IMR-90 (cell line): ENCODE measurements at regions of chr17 and their contacts with region 1.

Region 1: DNA sequence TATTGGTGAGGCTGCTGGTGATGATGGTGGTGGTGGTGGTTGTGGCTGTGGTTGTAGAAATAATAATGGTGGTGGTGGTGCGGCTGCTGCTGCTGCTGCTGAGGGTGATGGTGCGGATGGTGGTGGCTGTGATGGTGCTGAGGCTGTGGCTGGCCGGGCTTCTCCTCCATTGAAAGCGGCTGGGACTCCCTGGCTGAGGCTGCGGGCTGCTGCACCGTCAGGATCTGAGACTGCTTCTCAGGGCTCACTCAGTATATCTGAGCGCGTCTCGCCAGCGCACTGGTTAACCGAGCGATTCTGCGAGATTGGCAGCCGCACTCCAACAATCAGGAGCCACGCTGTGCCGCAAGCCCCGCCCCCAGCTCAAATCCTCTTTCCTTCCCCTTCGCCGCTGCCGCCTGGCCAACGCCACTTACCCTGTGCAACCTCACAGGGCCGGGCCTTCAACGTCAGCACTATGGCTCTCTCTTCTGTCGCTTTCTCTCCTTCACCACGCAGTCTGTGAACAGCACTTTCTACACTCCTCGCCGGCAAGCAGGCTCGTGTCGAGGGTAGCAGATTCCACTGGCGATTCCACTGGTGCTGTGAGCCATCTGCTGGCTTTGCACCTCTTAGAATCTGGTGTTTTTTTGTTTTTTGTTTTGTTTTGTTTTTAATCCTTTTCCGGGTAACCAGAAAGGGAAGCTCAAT is at the start of gene NUFIP2:
- DNase-seq: peak; percentile 98
- ATAC-seq: peak; percentile 90
- H3K4me3 ChIP-seq: peak within 1 kb of the TSS; percentile 70
- H3K27ac ChIP-seq: peak within 1 kb of the TSS; percentile 93
- H3K4me1 ChIP-seq: no peaks in the 10 kb centered on the region
- H3K27me3 ChIP-seq: no peaks in the 10 kb centered on the region
- CTCF ChIP-seq: no peak
- POLR2A ChIP-seq: peak; percentile 100
- RAD21 ChIP-seq: no peak
- total RNA-seq, gene NUFIP2: 25.6 and 38.9 TPM in 2 replicates

Region 2: GRCh38 chr17:29019475-29020181 is 274.4 kb before region 1 on chr17:
- CTCF ChIA-PET with region 1: no interaction called
- POLR2A ChIA-PET with region 1: no interaction called
- dilution Hi-C with region 1: no loop called
- in situ Hi-C with region 1: no loop called
- intact Hi-C with region 1: no loop called
- DNase-seq: no peak
- ATAC-seq: no peak
- H3K4me3 ChIP-seq: no peak overlapping the region
- H3K27ac ChIP-seq: no peak overlapping the region
- H3K4me1 ChIP-seq: no peaks in the 10 kb centered on the region
- H3K27me3 ChIP-seq: peaks cover 87% of the 10 kb centered on the region
- CTCF ChIP-seq: no peak
- POLR2A ChIP-seq: no peak
- RAD21 ChIP-seq: no peak

Region 3: GRCh38 chr17:29212681-29213121 is 81.3 kb before region 1 on chr17:
- CTCF ChIA-PET with region 1: no interaction called
- POLR2A ChIA-PET with region 1: no interaction called
- dilution Hi-C with region 1: no loop called
- in situ Hi-C with region 1: no loop called
- intact Hi-C with region 1: no loop called
- DNase-seq: peak; percentile 6
- ATAC-seq: no peak
- H3K4me3 ChIP-seq: no peak overlapping the region
- H3K27ac ChIP-seq: no peak overlapping the region
- H3K4me1 ChIP-seq: peaks cover 2% of the 10 kb centered on the region; the same call in 1 of the 2 replicates
- H3K27me3 ChIP-seq: 0 out of 2 replicates have a peak, but pooled peaks cover 2% of the 10 kb centered on the region
- CTCF ChIP-seq: no peak
- POLR2A ChIP-seq: no peak
- RAD21 ChIP-seq: no peak

Region 4: DNA sequence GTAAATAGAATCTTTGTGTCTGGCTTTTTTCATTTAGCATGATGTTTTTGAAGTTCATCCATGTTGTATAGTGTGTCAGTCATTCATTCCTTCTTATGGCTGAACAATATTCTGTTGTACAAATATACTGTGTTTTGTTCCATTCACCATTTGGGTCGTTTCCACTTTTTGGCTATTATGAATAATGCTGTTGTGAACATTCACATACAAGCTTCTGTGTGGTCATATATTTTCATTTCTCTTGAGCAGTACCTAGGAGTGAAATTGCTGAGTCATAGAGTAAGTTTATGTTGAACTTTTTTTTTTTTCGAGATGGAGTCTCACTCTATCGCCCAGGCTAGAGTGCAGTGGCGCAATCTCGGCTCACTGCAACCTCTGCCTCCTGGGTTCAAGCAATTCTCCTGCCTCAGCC is 63.8 kb after region 1 on chr17:
- CTCF ChIA-PET with region 1: no interaction called
- POLR2A ChIA-PET with region 1: no interaction called
- dilution Hi-C with region 1: no loop called
- in situ Hi-C with region 1: no loop called
- intact Hi-C with region 1: loop called (anchors 5 kb)
- DNase-seq: peak; percentile 65
- ATAC-seq: peak; percentile 80
- H3K4me3 ChIP-seq: no peak overlapping the region
- H3K27ac ChIP-seq: no peak overlapping the region
- H3K4me1 ChIP-seq: no peaks in the 10 kb centered on the region; the same call in 1 of the 2 replicates
- H3K27me3 ChIP-seq: 0 out of 2 replicates have a peak, but pooled peaks cover 2% of the 10 kb centered on the region
- CTCF ChIP-seq: no peak
- POLR2A ChIP-seq: no peak
- RAD21 ChIP-seq: no peak

Region 5: GRCh38 chr17:29589524-29590410 is 295.7 kb after region 1 on chr17 and contains the start of gene GIT1:
- CTCF ChIA-PET with region 1: no interaction called
- POLR2A ChIA-PET with region 1: no interaction called
- dilution Hi-C with region 1: no loop called
- in situ Hi-C with region 1: no loop called
- intact Hi-C with region 1: loop called (anchors 1 kb)
- DNase-seq: peak; percentile 78
- ATAC-seq: peak; percentile 82
- H3K4me3 ChIP-seq: peak within 1 kb of the TSS; percentile 85
- H3K27ac ChIP-seq: peak within 1 kb of the TSS; percentile 92
- H3K4me1 ChIP-seq: peaks cover 43% of the 10 kb centered on the region
- H3K27me3 ChIP-seq: peaks cover 2% of the 10 kb centered on the region; the same call in 1 of the 2 replicates
- CTCF ChIP-seq: peak; percentile 19; the same call in 1 of the 2 replicates
- POLR2A ChIP-seq: no peak
- RAD21 ChIP-seq: no peak
- total RNA-seq, gene GIT1: 13.3 and 14.2 TPM in 2 replicates